ENCODE measurements at regions of chr7 and their contacts with region 1.

Region 1: DNA sequence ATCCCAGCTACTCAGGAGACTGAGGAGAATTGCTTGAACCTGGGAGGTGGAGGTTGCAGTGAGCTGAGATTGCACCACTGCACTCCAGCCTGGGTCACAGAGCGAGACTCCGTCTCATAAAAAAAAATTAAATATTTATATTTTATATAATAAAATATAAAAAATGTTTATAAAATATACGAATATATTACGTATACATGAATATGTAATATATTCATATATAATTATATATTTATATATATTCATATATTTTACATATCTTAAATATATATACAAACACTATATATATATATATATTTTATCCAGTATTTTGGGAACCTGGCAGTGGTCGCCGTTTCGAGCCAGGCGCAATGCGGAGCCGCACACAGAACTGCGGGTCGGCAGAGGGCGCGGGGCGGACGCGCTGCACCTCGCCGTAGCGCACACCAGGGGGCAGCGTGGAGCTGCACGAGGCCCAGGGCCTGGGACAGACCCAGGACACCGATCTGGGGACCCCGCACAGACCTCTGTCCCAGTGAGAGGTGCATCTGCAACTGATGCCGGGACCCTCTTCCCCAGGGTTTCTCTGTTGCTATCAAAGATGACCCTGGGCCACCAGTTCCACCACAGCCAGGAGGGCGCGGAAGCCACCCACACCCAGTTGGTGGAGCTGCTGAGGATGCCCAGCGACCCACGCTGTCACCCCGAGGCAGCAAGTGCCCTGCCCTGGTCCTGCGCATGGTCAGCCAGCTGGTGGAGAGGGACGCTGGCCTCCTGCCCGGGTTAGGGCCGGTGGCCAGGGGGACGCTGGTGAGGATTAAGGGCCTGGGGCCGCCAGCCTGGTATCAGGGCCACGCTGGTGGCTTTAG is 22.7 kb downstream of the AP5Z1 start:
- DNase-seq: peak in 5 of 10 donors; percentile 49 to 94 (median 54)

Region 2: DNA sequence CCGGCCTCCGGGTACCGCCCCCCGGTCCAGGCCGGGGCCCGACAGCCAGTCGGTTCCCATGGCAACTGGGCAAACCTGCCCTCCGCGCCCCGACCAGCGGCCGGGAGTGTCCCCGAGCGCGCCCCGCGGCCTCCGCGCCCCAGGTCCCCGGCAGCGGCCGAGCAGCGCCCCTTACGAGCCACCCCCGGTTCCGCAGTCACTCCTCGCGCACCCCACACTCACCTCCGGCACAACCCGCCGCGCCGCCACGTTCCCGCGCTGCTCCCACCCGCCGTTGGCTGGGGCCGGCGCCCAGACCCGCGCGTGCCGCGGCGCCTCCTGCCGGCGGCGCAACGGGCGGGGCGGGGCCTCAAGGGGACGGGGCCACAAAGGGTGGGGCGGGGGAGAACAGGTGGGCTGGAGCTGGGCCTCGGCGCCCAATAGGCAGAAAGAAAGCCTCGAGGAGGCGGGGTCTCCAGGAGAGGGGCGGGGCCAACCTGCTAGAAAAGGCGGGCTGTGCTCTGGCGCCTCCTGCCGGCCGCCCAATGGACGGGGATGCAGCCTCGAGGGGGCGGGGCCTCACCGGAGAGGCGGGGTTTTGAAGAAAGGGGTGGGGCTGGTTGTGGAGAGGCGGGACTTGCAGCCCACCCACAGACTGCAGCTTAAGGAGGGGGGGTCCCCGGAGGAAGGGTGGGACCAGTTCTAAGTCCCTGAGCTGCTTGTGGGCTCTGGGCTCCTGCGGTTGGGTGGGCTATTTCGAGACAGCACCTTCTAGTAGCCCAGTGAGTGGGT is 85.5 kb after region 1 on chr7 and contains the start of gene RADIL:
- intact Hi-C with region 1: loop called (anchors 5 kb)
- DNase-seq: peak; percentile 86 to 99 (median 94)

Region 3: GRCh38 chr7:4960363-4960762 is 162.3 kb after region 1 on chr7:
- intact Hi-C with region 1: loop called (anchors 5 kb)
- DNase-seq: peak in 4 of 10 donors; percentile 51 to 83 (median 56)

Region 4: DNA sequence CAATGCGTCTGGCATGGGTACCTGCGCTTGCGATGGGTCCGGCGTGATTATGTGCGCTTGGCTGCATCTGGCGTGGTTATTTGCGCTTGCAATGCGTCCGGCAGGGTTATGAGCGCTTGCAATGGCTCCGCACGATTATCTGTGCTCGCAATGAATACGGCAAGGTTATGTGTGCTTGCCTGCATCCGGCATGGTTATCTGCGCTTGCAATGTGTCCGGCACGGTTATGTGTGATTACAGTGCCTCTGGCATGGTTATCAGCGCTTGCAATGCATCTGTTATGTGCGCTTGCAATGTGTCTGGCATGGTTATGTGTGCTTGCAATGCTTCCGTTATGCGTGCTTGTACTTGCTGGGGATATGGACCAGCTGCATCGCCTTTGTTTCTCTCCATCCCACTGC is 285.2 kb after region 1 on chr7:
- intact Hi-C with region 1: loop called (anchors 1 kb)
- DNase-seq: no peak